ENCODE measurements at regions of chr11 and their contacts with region 1.

Region 1: GRCh38 chr11:66579017-66579606 is 10.7 kb upstream of the CTSF start:
- DNase-seq: peak; percentile 51 to 78 (median 66)
- ATAC-seq: peak; percentile 91
- H3K4me3 ChIP-seq: no peak overlapping the region
- H3K4me3 Mint-ChIP-seq: peak overlapping the region in 2 of 10 donors; percentile 22 to 53
- H3K27ac ChIP-seq: no peak overlapping the region
- H3K27ac Mint-ChIP-seq: peak overlapping the region in 2 of 9 donors; percentile 65 to 71
- H3K4me1 ChIP-seq: peaks cover 0 to 6% of the 10 kb centered on the region in 2 donors
- H3K4me1 Mint-ChIP-seq: peaks cover 0 to 11% (median 8%) of the 10 kb centered on the region in 7 donors
- H3K27me3 ChIP-seq: no peaks in the 10 kb centered on the region
- H3K27me3 Mint-ChIP-seq: peaks cover 0 to 25% (median 15%) of the 10 kb centered on the region in 5 donors

Region 2: DNA sequence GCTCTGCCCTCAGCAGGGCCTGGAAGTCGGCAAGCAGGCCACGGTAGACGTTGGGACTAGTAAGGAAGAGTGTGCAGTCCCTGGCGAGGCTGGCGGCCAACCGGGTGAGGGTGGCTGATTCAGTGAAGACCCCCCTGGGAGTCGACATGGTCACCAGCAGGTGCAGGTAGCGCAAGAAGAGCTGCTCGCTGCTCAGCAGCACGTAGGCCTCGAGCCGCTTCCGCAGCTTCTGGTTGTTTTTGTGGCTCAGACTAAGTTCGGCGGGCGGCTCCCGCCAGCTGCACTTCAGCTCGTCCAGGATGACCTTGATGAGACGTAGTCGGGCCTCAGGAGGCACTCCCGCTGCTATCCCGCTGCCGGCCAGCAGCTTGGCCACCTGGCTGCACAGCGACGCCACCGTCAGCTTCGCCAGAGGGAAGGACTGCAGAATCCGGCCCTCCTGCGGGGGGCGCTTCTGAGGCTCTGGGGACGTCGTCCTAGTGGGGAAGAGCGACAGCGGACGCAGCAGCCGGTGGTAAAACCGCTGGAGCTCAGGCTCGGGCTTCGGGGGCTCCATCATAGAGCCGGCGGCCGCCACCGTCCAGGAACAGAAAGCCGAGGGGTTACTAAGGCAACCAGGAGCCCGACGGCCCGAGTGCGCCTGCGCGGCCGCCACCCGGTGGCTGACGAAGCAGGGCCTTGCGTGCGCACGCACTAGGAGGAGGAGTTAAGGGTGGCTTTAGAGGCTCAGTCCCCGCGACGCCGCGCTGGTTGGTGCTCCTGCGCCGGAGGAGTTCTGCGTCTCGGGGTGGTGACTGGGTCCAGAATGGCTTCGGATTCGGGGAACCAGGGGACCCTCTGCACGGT is 13.6 kb after region 1 on chr11 and contains the starts of genes CCDC87 and CCS:
- CTCF ChIA-PET with region 1: interaction called, 11 read pairs
- POLR2A ChIA-PET with region 1: no interaction called
- intact Hi-C with region 1: no loop called
- DNase-seq: peak; percentile 94 to 98 (median 96)
- ATAC-seq: peak; percentile 98
- H3K4me3 ChIP-seq: peak within 1 kb of the TSS; percentile 98
- H3K4me3 Mint-ChIP-seq: peak within 1 kb of the TSS; percentile 89 to 100 (median 98)
- H3K27ac ChIP-seq: peak within 1 kb of the TSS; percentile 94
- H3K27ac Mint-ChIP-seq: peak within 1 kb of the TSS; percentile 90 to 100 (median 97)
- H3K4me1 ChIP-seq: peaks cover 9 to 30% of the 10 kb centered on the region in 2 donors
- H3K4me1 Mint-ChIP-seq: peaks cover 13 to 40% (median 28%) of the 10 kb centered on the region in 7 donors
- H3K27me3 ChIP-seq: no peaks in the 10 kb centered on the region
- H3K27me3 Mint-ChIP-seq: no peaks in the 10 kb centered on the region
- total RNA-seq, gene CCDC87: 0.11 to 1.2 (median 0.60) TPM in 4 of 5 experiments, not detected in the other
- total RNA-seq, gene CCS: 32.8 to 63.5 (median 42.5) TPM

Region 3: GRCh38 chr11:66834501-66834845 is 255.4 kb after region 1 on chr11:
- CTCF ChIA-PET with region 1: no interaction called
- POLR2A ChIA-PET with region 1: no interaction called
- intact Hi-C with region 1: loop called (anchors 1 to 5 kb)
- DNase-seq: no peak
- ATAC-seq: no peak
- H3K4me3 ChIP-seq: no peak overlapping the region
- H3K4me3 Mint-ChIP-seq: no peak overlapping the region
- H3K27ac ChIP-seq: peak overlapping the region; percentile 6
- H3K27ac Mint-ChIP-seq: peak overlapping the region in 8 of 9 donors; percentile 22 to 92 (median 62)
- H3K4me1 ChIP-seq: peaks cover 3 to 6% of the 10 kb centered on the region in 2 donors
- H3K4me1 Mint-ChIP-seq: peaks cover 0 to 23% (median 18%) of the 10 kb centered on the region in 7 donors
- H3K27me3 ChIP-seq: no peaks in the 10 kb centered on the region
- H3K27me3 Mint-ChIP-seq: no peaks in the 10 kb centered on the region

Measured in naive thymus-derived CD4-positive, alpha-beta T cell (primary cell).